ENCODE measurements at regions of chr7 and their contacts with region 1.

Region 1: DNA sequence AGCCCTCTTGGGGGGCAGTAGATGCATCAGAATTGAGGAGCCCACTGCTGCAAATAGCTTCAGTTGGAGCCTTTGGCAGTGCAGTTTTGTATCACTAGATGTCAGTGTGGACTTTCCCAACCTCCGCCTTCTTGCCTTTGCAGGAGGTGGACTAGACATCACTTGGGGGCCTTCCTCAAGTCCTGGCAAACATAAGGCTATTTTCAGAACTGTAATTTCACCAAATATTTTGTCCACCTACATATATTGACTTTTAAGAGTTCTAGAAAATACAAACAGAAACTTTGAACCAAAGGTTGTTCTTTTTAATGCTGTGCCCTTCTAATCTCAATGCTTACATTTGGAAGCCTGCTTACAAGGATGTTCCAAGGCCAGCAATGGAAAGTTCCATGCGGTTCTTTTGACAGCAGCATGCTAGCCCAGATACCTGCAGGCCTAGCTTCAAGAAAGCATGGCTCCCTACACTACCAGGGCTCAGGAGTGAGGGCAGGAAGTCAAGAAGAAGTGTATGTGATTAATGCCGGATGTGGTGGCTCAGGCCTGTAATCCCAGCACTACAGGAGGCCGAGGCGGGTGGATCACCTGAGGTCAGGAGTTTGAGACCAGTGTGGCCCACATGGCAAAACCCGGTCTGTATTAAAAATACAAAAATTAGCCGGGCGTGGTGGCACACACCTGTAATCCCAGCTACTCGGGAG is 8.0 kb upstream of the ZNRF2 start:
- DNase-seq: peak; percentile 10 to 77 (median 55)
- ATAC-seq: peak; percentile 86
- H3K4me3 ChIP-seq: no peak overlapping the region
- H3K4me3 Mint-ChIP-seq: no peak overlapping the region
- H3K27ac ChIP-seq: no peak overlapping the region
- H3K27ac Mint-ChIP-seq: no peak overlapping the region
- H3K4me1 ChIP-seq: no peaks in the 10 kb centered on the region
- H3K4me1 Mint-ChIP-seq: peaks cover 9% of the 10 kb centered on the region
- H3K27me3 ChIP-seq: no peaks in the 10 kb centered on the region
- H3K27me3 Mint-ChIP-seq: no peaks in the 10 kb centered on the region
- CTCF ChIP-seq: peak; percentile 69

Region 2: DNA sequence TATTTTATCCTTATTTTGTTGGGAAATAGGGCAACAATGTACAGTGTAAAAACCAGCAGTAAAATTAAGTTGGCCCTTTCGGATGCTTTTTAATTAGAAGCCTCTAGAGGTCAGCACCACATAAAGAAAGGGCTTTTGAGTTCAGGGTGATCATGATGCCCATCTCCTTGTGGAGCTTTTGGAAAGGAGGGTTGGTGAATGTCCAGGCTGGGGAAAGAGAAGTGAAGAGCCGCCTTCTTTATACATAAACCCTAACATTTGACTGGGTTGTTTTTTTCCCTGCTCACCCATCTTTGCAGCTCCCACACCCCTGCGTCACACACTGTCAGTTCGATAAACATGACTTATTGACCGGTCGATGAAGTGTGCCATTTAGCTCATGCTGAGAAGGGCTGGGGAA is 111.8 kb before region 1 on chr7:
- CTCF ChIA-PET with region 1: interaction called, 3 read pairs
- POLR2A ChIA-PET with region 1: no interaction called
- intact Hi-C with region 1: loop called in 1 of 2 experiments (anchors 10 kb)
- DNase-seq: peak in 2 of 9 experiments; percentile 40 to 53
- ATAC-seq: no peak
- H3K4me3 ChIP-seq: no peak overlapping the region
- H3K4me3 Mint-ChIP-seq: no peak overlapping the region
- H3K27ac ChIP-seq: no peak overlapping the region
- H3K27ac Mint-ChIP-seq: no peak overlapping the region
- H3K4me1 ChIP-seq: peaks cover 25% of the 10 kb centered on the region
- H3K4me1 Mint-ChIP-seq: peaks cover 32% of the 10 kb centered on the region
- H3K27me3 ChIP-seq: no peaks in the 10 kb centered on the region
- H3K27me3 Mint-ChIP-seq: no peaks in the 10 kb centered on the region
- CTCF ChIP-seq: peak; percentile 15

Region 3: DNA sequence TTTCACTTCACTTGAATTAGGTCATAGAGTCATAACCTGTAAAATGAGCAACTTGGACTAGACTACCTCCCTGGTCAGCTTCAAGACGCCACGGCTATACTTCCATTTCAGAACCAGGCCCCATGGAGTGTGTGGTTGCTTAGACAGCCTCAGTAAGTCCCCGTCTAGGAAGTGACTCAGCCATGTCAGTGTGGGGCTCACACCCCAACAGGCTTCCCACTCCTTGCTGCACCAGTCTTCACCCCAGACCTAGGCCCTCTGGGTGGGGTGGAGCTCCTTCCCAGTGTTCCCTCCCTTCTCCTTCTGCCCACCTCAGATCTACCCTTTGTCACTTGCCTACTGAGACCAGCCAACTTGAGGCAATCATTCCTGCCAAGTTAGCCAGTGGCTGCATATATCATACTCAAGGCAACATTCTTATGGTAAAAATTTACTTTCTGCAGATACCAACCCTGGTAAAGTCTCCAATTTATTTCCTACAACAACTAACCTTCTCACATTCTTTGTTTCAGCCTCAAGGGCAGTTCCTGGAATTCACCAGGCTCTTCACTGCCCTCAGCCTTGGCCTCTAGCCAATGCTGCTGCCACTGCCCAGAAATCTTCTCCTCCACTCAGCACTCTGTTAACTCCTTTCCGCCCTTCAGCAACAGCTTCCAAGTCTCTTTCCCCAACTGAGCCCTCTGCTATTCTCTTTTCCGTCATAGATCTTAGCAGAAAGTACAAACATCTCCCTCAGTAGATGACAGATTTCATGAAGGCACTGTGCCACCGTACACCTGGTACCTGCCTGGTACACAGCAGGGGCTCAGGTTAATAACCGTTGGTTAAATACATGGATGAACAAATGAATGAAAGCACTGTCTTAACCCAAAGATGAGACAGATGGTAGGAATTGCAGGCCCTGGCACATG is 23.2 kb before region 1 on chr7:
- CTCF ChIA-PET with region 1: no interaction called
- POLR2A ChIA-PET with region 1: no interaction called
- intact Hi-C with region 1: no loop called
- DNase-seq: no peak
- ATAC-seq: no peak
- H3K4me3 ChIP-seq: no peak overlapping the region
- H3K4me3 Mint-ChIP-seq: no peak overlapping the region
- H3K27ac ChIP-seq: no peak overlapping the region
- H3K27ac Mint-ChIP-seq: no peak overlapping the region
- H3K4me1 ChIP-seq: peaks cover 8% of the 10 kb centered on the region
- H3K4me1 Mint-ChIP-seq: peaks cover 16% of the 10 kb centered on the region
- H3K27me3 ChIP-seq: no peaks in the 10 kb centered on the region
- H3K27me3 Mint-ChIP-seq: no peaks in the 10 kb centered on the region
- CTCF ChIP-seq: no peak

Region 4: GRCh38 chr7:30412810-30413504 is 136.6 kb after region 1 on chr7:
- CTCF ChIA-PET with region 1: interaction called, 27 read pairs
- POLR2A ChIA-PET with region 1: no interaction called
- intact Hi-C with region 1: loop called (anchors 1 to 2 kb)
- DNase-seq: peak in 3 of 9 experiments; percentile 13 to 62 (median 51)
- ATAC-seq: no peak
- H3K4me3 ChIP-seq: no peak overlapping the region
- H3K4me3 Mint-ChIP-seq: no peak overlapping the region
- H3K27ac ChIP-seq: no peak overlapping the region
- H3K27ac Mint-ChIP-seq: no peak overlapping the region
- H3K4me1 ChIP-seq: no peaks in the 10 kb centered on the region
- H3K4me1 Mint-ChIP-seq: no peaks in the 10 kb centered on the region
- H3K27me3 ChIP-seq: no peaks in the 10 kb centered on the region
- H3K27me3 Mint-ChIP-seq: no peaks in the 10 kb centered on the region
- CTCF ChIP-seq: no peak

Region 5: GRCh38 chr7:30445770-30446169 is 169.4 kb after region 1 on chr7:
- CTCF ChIA-PET with region 1: interaction called, 3 read pairs
- POLR2A ChIA-PET with region 1: no interaction called
- intact Hi-C with region 1: loop called in 1 of 2 experiments (anchors 5 kb)
- DNase-seq: peak; percentile 47 to 84 (median 73)
- ATAC-seq: peak; percentile 99
- H3K4me3 ChIP-seq: no peak overlapping the region
- H3K4me3 Mint-ChIP-seq: peak overlapping the region; percentile 0
- H3K27ac ChIP-seq: no peak overlapping the region
- H3K27ac Mint-ChIP-seq: peak overlapping the region; percentile 43
- H3K4me1 ChIP-seq: no peaks in the 10 kb centered on the region
- H3K4me1 Mint-ChIP-seq: peaks cover 3% of the 10 kb centered on the region
- H3K27me3 ChIP-seq: no peaks in the 10 kb centered on the region
- H3K27me3 Mint-ChIP-seq: no peaks in the 10 kb centered on the region
- CTCF ChIP-seq: peak; percentile 26

Region 6: GRCh38 chr7:30584415-30584814 is 308.1 kb after region 1 on chr7:
- CTCF ChIA-PET with region 1: no interaction called
- POLR2A ChIA-PET with region 1: no interaction called
- intact Hi-C with region 1: no loop called
- DNase-seq: no peak
- ATAC-seq: no peak
- H3K4me3 ChIP-seq: no peak overlapping the region
- H3K4me3 Mint-ChIP-seq: no peak overlapping the region
- H3K27ac ChIP-seq: no peak overlapping the region
- H3K27ac Mint-ChIP-seq: no peak overlapping the region
- H3K4me1 ChIP-seq: no peaks in the 10 kb centered on the region
- H3K4me1 Mint-ChIP-seq: peaks cover 10% of the 10 kb centered on the region
- H3K27me3 ChIP-seq: no peaks in the 10 kb centered on the region
- H3K27me3 Mint-ChIP-seq: no peaks in the 10 kb centered on the region
- CTCF ChIP-seq: no peak